Activated CD4-positive, alpha-beta memory T cell treated with anti-CD3 and anti-CD28 coated beads for 36 hours (primary cell): ENCODE measurements at regions of chr1 and their contacts with region 1.

Region 1: DNA sequence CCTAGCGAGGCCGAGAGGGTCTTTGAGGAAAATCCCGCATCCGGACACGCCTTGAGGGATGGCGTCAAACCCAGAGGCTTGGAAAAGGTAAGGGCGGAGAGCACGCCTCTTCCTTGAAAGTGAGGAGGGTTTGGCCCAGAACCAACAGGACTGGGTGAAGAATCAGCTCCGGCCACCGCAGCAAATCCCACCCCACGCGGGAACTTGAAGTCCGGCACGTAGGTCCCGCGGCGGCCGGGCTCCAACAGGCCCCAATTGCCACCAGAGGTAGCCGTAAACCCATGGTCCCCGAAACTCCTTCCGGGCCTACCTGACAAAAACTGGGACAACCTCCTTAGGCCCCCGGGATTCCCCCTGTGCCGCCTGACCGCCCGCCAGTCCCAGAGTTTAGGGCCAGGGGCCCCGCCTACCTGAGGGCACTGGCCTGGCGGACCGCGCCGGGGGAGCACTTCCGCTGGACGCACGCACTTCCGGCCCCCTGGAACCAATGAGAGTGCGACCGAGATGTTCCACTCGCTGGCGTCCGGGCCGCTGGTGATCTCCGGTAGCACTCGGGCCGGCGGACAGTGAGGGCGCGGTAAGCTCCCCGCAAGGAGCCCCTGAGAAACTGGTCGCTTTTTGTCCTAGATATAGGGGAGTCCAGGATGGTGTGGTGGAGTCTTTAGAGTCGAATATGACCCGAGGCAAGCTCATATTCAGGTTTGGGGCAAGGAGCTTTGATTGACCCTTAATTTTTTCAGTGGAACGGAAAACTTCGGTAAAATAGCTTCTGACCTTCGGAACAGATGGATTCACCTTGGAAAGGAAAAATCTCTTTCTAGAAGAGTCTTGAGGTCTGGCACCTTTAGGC is at the starts of genes LZIC and NMNAT1:
- DNase-seq: peak; percentile 96
- H3K4me3 Mint-ChIP-seq: peak within 1 kb of the TSS; percentile 99
- H3K27ac Mint-ChIP-seq: peak within 1 kb of the TSS; percentile 91
- H3K4me1 Mint-ChIP-seq: peaks cover 20% of the 10 kb centered on the region
- H3K27me3 Mint-ChIP-seq: no peaks in the 10 kb centered on the region
- total RNA-seq, gene LZIC: 22.0 to 22.8 TPM
- total RNA-seq, gene NMNAT1: 7.8 to 9.9 TPM

Region 2: GRCh38 chr1:9900142-9901043 is 42.8 kb before region 1 on chr1:
- CTCF ChIA-PET with region 1: interaction called, 15 read pairs
- POLR2A ChIA-PET with region 1: interaction called, 13 read pairs
- intact Hi-C with region 1: loop called (anchors 1 kb)
- DNase-seq: no peak
- H3K4me3 Mint-ChIP-seq: no peak overlapping the region
- H3K27ac Mint-ChIP-seq: no peak overlapping the region
- H3K4me1 Mint-ChIP-seq: peaks cover 30% of the 10 kb centered on the region
- H3K27me3 Mint-ChIP-seq: no peaks in the 10 kb centered on the region

Region 3: DNA sequence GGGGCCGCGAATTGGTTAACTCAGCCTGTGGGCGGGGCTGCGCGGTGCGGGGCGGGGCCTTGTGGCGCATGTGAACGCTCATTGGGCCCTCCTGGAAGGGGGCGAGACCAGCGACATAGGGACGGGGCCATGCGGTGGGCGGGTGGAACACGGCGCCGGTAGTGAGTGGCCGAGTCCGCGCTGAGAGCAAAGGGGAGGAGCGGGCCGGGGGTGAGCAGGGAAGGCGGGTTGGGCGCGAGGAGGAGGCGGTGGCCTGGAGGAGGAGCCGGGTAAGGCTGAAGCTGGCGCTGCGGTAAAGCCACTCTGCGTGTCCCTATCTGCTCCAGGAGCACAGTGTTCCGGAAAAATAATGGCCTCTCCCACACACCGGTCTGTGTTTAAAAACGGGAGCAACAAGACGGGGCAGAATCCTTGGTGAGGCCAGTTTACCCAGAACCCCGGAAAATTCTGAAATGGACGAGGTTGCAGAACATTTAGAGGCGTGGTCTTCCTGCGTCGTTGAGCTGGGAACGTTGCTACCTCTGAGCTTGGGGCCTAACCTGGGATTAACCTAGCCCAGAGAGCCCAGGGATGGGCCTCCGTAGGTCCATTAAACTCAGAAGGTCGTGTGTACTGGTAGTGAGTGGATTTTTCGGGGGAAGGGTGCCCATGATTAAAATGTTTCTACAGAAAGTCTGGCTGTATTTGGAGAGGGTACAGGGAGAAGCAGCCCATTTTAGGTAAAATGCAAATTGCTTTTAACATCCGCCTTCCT is 32.6 kb before region 1 on chr1:
- CTCF ChIA-PET with region 1: interaction called, 5 read pairs
- POLR2A ChIA-PET with region 1: no interaction called
- intact Hi-C with region 1: loop called (anchors 1 kb)
- DNase-seq: peak; percentile 100
- H3K4me3 Mint-ChIP-seq: peak overlapping the region; percentile 94
- H3K27ac Mint-ChIP-seq: peak overlapping the region; percentile 94
- H3K4me1 Mint-ChIP-seq: peaks cover 28% of the 10 kb centered on the region
- H3K27me3 Mint-ChIP-seq: no peaks in the 10 kb centered on the region

Region 4: DNA sequence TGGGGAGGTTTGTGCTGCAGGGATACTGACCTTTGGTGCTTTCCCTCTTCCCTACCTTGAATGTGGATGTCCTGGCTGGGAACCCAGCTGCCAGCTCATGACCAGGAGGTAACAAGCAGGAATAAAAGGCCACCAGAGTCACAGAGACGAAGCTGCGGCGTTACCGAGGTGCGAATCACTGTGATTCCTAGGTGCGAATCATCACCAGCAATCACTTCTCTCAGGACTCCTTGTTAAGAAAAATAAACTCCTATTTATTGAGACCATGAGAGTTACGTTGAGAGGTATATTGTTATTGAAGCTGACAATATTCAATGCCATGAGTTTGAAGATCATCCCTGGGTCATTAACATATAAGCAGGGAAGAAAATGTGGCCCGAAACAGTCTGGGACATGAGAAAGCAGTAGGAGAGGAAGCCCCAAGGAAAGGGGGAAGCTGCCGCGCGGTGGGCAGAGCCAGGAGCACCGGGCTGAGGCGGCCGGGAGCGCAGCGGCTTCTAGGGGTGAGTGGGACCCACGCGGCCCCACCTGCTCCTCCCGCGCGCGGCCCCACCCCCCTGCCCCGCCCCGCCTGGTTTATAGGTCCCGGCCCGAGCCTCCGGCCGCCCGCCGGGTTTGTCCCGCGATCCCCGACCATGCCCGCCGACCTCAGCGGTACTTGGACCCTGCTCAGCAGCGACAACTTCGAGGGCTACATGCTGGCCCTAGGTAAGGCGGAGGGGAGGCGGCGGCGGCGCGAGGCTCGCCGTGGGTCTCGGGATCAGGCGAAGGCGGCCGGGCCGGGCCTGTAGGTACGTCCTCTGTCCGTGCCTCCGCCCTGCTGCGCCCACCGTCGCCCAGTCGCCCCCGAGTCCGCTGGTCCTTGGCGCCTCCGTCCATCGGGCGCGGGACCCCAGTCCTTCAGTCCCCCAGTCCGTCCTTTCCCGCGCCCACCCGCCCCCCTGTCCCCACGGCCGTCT is 53.7 kb after region 1 on chr1 and contains the start of gene RBP7:
- CTCF ChIA-PET with region 1: no interaction called
- POLR2A ChIA-PET with region 1: no interaction called
- intact Hi-C with region 1: no loop called
- DNase-seq: peak; percentile 15
- H3K4me3 Mint-ChIP-seq: peak within 1 kb of the TSS; percentile 61
- H3K27ac Mint-ChIP-seq: no peak within 1 kb of the TSS
- H3K4me1 Mint-ChIP-seq: peaks cover 4% of the 10 kb centered on the region
- H3K27me3 Mint-ChIP-seq: peaks cover 28% of the 10 kb centered on the region
- total RNA-seq, gene RBP7: not detected